Caki2 (cell line): ENCODE measurements at regions of chr5 and their contacts with region 1.

Region 1: DNA sequence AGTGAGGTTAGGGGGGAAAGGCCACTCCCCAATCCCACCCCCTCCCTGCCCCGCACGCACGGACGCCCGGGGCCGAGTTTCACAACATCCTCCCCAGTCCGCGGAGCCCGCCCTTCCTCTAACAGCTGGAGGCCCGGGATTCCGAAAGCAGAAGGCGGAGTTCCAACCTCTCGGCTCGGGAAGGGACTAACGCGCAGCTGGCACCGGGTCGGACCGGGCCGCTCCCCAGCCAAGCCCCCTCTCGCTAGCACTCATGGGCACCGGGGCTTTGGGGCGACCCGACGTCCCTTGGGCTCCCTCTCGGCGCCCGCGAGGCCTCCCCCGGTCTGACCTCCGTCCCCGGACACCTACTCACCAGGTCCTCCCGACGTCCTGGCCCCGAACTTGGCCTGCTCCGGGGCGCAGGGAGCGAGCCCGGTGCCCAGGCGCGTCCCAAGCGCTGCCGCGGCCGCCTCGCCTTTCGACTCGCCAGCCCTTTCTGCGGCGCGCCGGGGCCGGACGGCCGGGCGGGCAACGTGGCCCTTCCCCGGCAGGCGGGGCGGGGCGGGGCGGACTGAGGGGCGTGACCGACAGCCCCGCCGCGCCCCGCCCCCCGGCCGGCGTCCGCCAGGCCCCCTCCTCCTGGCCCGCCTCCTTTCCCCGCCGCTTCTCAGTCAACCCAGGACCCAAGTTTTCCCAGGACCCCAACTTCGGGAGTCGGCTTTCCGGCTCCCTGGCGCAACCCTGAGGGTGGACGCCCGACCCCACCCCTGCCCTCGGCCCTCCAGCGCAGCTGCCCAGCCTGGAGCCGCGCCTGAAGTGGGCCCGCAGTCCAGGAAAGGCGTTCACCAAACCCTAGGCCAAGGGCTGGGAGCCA is at the start of gene MGAT1:
- DNase-seq: peak; percentile 74
- total RNA-seq, gene MGAT1: 155 and 157 TPM in 2 replicates

Region 2: GRCh38 chr5:180704368-180704869 is 98.1 kb before region 1 on chr5:
- in situ Hi-C with region 1: no loop called
- DNase-seq: peak; percentile 69

Region 3: GRCh38 chr5:180839925-180840324 is 37.4 kb after region 1 on chr5:
- in situ Hi-C with region 1: loop called (anchors 5 kb)
- DNase-seq: no peak

Region 4: GRCh38 chr5:181100121-181101015 is 297.8 kb after region 1 on chr5:
- in situ Hi-C with region 1: no loop called
- DNase-seq: no peak